Esophagus muscularis mucosa (tissue), 4 donors: ENCODE measurements at regions of chr17 and their contacts with region 1.

Region 1: GRCh38 chr17:60059082-60059481 is 19.6 kb downstream of the HEATR6 start:
- DNase-seq: no peak
- H3K4me3 ChIP-seq: no peak overlapping the region
- H3K27ac ChIP-seq: no peak overlapping the region
- H3K4me1 ChIP-seq: no peaks in the 10 kb centered on the region
- H3K27me3 ChIP-seq: no peaks in the 10 kb centered on the region
- CTCF ChIP-seq: no peak
- EP300 ChIP-seq: no peak
- POLR2A ChIP-seq: no peak

Region 2: DNA sequence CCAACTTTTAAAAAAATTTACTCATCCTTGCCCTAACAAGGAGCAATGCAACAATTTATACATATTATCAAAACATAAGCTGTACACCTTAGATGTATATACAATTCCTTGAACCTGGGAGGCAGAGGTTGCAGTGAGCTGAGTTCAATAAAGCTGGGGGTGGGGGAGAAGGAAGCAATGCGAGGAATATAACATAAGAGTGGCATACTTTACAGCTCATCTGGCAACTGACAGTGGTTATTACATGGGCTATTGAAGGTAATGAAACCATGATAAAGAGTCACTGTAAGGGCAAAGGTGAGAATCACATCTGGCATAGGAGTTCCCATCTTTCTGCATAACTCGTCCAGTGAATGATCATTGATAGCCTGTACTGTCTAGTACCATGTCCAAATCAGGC is 134.4 kb after region 1 on chr17:
- intact Hi-C with region 1: loop called (anchors 5 kb)
- DNase-seq: no peak
- H3K4me3 ChIP-seq: no peak overlapping the region
- H3K27ac ChIP-seq: no peak overlapping the region
- H3K4me1 ChIP-seq: no peaks in the 10 kb centered on the region
- H3K27me3 ChIP-seq: no peaks in the 10 kb centered on the region
- CTCF ChIP-seq: no peak
- EP300 ChIP-seq: no peak
- POLR2A ChIP-seq: no peak

Region 3: DNA sequence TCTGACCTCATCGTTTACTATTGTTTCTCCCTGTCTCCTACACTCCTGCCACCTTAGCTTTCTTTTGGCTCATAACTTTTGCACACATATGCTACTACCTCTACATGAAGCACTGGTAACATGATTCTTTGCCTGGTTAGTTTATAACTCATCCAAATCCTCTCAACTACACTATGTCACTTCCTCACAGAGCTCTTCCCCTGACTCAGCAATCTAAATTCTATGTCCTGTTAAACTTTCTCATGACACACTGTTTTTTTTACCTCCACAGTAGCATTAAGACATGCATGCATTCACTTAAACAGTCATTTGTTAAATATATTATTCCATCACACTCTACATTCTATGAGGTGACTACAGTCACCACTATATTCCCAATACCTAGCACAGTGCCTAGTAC is 447.2 kb after region 1 on chr17:
- intact Hi-C with region 1: no loop called
- DNase-seq: no peak
- H3K4me3 ChIP-seq: no peak overlapping the region
- H3K27ac ChIP-seq: no peak overlapping the region
- H3K4me1 ChIP-seq: peaks cover 0 to 56% (median 53%) of the 10 kb centered on the region in 4 donors
- H3K27me3 ChIP-seq: no peaks in the 10 kb centered on the region
- CTCF ChIP-seq: no peak
- EP300 ChIP-seq: no peak
- POLR2A ChIP-seq: no peak